ENCODE measurements at regions of chr20 and their contacts with region 1.

Region 1: DNA sequence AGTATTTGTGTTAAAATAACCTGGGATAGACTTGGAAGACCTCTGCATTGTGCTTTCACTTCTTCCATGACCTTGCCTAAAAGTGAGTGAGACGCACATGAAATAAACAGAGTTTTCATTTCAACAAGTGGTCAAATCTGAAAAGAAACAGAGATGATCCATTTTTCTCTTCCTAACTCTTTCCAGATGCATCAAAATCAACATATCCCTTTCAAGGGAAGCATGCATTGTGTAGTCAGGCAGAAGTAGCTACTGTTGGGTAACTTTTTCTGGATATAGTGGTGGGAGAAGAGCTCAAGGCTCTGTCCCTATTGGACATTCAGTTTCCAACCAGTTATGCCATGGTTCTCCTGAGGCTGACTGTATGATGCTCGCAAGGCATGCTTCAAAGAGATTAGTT is 233.0 kb upstream of the JAG1 start:
- DNase-seq: no peak
- ATAC-seq: no peak
- H3K4me3 ChIP-seq: no peak overlapping the region
- H3K4me3 Mint-ChIP-seq: no peak overlapping the region
- H3K27ac ChIP-seq: no peak overlapping the region
- H3K27ac Mint-ChIP-seq: no peak overlapping the region
- H3K4me1 ChIP-seq: no peaks in the 10 kb centered on the region
- H3K4me1 Mint-ChIP-seq: no peaks in the 10 kb centered on the region
- H3K27me3 ChIP-seq: no peaks in the 10 kb centered on the region
- H3K27me3 Mint-ChIP-seq: no peaks in the 10 kb centered on the region
- CTCF ChIP-seq: no peak

Region 2: GRCh38 chr20:10857352-10858070 is 49.3 kb before region 1 on chr20:
- CTCF ChIA-PET with region 1: no interaction called
- POLR2A ChIA-PET with region 1: no interaction called
- intact Hi-C with region 1: loop called in 1 of 2 experiments (anchors 5 kb)
- DNase-seq: no peak
- ATAC-seq: no peak
- H3K4me3 ChIP-seq: no peak overlapping the region
- H3K4me3 Mint-ChIP-seq: no peak overlapping the region
- H3K27ac ChIP-seq: no peak overlapping the region
- H3K27ac Mint-ChIP-seq: no peak overlapping the region
- H3K4me1 ChIP-seq: no peaks in the 10 kb centered on the region
- H3K4me1 Mint-ChIP-seq: no peaks in the 10 kb centered on the region
- H3K27me3 ChIP-seq: no peaks in the 10 kb centered on the region
- H3K27me3 Mint-ChIP-seq: no peaks in the 10 kb centered on the region
- CTCF ChIP-seq: no peak

Region 3: DNA sequence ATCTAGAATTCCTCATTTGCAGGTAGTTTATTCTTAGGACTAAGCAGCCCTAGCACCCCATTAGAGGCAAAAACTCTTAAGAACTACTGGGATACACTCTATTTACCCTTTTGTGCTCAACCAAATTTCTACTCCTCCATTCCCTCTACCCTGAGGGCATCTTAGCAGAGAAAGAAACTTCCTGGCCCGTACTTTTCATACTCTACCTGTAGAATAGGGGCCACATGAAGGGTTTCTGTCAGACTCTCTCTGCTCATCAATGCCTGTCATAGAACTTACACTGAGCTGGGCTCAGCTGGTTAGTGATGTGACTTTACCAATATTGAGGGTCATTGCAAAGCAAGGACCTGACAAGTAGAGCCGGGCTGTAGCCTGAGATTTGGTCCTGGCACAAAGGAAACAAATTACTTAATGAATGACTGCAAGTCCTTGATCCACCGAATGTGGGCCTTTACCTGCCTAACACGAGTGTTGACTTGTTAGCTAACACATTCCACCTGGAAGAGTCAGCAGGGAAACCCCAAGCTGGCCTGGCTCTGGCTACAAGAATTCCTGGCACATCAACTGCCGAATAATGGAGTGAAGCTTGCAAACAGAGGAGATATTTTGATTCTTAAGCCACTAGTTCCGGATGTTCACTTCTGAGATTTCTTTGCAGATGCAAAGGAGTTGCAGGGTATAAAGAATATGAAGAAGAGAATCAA is 47.5 kb after region 1 on chr20:
- CTCF ChIA-PET with region 1: no interaction called
- POLR2A ChIA-PET with region 1: no interaction called
- intact Hi-C with region 1: no loop called
- DNase-seq: no peak
- ATAC-seq: no peak
- H3K4me3 ChIP-seq: no peak overlapping the region
- H3K4me3 Mint-ChIP-seq: no peak overlapping the region
- H3K27ac ChIP-seq: no peak overlapping the region
- H3K27ac Mint-ChIP-seq: no peak overlapping the region
- H3K4me1 ChIP-seq: no peaks in the 10 kb centered on the region
- H3K4me1 Mint-ChIP-seq: no peaks in the 10 kb centered on the region
- H3K27me3 ChIP-seq: no peaks in the 10 kb centered on the region
- H3K27me3 Mint-ChIP-seq: no peaks in the 10 kb centered on the region
- CTCF ChIP-seq: no peak

Region 4: GRCh38 chr20:10982692-10983091 is 75.9 kb after region 1 on chr20:
- CTCF ChIA-PET with region 1: no interaction called
- POLR2A ChIA-PET with region 1: no interaction called
- intact Hi-C with region 1: no loop called
- DNase-seq: no peak
- ATAC-seq: no peak
- H3K4me3 ChIP-seq: no peak overlapping the region
- H3K4me3 Mint-ChIP-seq: no peak overlapping the region
- H3K27ac ChIP-seq: no peak overlapping the region
- H3K27ac Mint-ChIP-seq: no peak overlapping the region
- H3K4me1 ChIP-seq: no peaks in the 10 kb centered on the region
- H3K4me1 Mint-ChIP-seq: no peaks in the 10 kb centered on the region
- H3K27me3 ChIP-seq: no peaks in the 10 kb centered on the region
- H3K27me3 Mint-ChIP-seq: no peaks in the 10 kb centered on the region
- CTCF ChIP-seq: no peak